Heart right ventricle (tissue), 16 donors: ENCODE measurements at regions of chrX and their contacts with region 1.

Region 1: DNA sequence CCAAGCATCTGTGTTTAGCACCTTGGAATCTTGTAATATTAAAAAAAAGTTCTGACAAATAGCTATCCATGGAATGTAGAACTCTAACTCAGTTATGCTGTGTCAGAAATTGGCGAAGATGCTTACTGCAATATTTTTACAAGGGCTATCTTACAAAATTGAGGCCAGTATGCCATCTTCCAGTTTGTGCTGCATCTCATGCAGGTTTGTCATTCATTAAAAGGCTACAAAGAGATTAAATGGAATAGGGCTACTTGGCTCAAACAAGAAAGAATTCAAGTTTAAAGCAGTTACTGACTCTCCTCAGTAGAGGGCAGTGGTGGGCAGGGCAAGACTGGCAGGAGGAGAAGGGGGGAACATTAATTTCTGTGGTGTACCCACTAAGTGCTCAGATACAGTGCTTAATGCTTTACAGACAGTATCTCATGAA is 66.5 kb downstream of the SHROOM4 start:
- DNase-seq: no peak
- ATAC-seq: no peak
- H3K4me3 ChIP-seq: no peak overlapping the region
- H3K27ac ChIP-seq: no peak overlapping the region
- H3K4me1 ChIP-seq: no peaks in the 10 kb centered on the region
- H3K27me3 ChIP-seq: peaks cover 0 to 42% (median 0%) of the 10 kb centered on the region in 7 donors
- CTCF ChIP-seq: peak; percentile 46 to 74 (median 66)

Region 2: GRCh38 chrX:50618788-50619558 is 128.5 kb before region 1 on chrX:
- intact Hi-C with region 1: no loop called
- DNase-seq: peak in 1 of 2 donors; percentile 12
- ATAC-seq: peak; percentile 57 to 95 (median 78)
- H3K4me3 ChIP-seq: no peak overlapping the region
- H3K27ac ChIP-seq: peak overlapping the region in 7 of 10 donors; percentile 13 to 76 (median 37)
- H3K4me1 ChIP-seq: peaks cover 0 to 8% (median 0%) of the 10 kb centered on the region in 9 donors
- H3K27me3 ChIP-seq: peaks cover 0 to 32% (median 0%) of the 10 kb centered on the region in 7 donors
- CTCF ChIP-seq: peak in 3 of 9 donors; percentile 13 to 42 (median 16)

Region 3: GRCh38 chrX:50691820-50692219 is 55.7 kb before region 1 on chrX:
- intact Hi-C with region 1: loop called in 1 of 10 experiments (anchors 10 kb)
- DNase-seq: no peak
- ATAC-seq: peak in 6 of 8 donors; percentile 44 to 65 (median 58)
- H3K4me3 ChIP-seq: no peak overlapping the region
- H3K27ac ChIP-seq: no peak overlapping the region
- H3K4me1 ChIP-seq: no peaks in the 10 kb centered on the region
- H3K27me3 ChIP-seq: peaks cover 0 to 59% (median 0%) of the 10 kb centered on the region in 7 donors
- CTCF ChIP-seq: peak; percentile 21 to 73 (median 63)

Region 4: GRCh38 chrX:50812995-50813826 is 65.7 kb after region 1 on chrX:
- intact Hi-C with region 1: loop called in 2 of 10 experiments (anchors 10 kb)
- DNase-seq: peak; percentile 45 to 46
- ATAC-seq: peak; percentile 56 to 85 (median 74)
- H3K4me3 ChIP-seq: peak overlapping the region; percentile 37 to 72 (median 62)
- H3K27ac ChIP-seq: peak overlapping the region; percentile 54 to 86 (median 82)
- H3K4me1 ChIP-seq: no peaks in the 10 kb centered on the region
- H3K27me3 ChIP-seq: peaks cover 0 to 61% (median 0%) of the 10 kb centered on the region in 7 donors
- CTCF ChIP-seq: no peak

Region 5: GRCh38 chrX:50905334-50905733 is 157.8 kb after region 1 on chrX:
- intact Hi-C with region 1: loop called (anchors 1 to 5 kb)
- DNase-seq: no peak
- ATAC-seq: no peak
- H3K4me3 ChIP-seq: no peak overlapping the region
- H3K27ac ChIP-seq: no peak overlapping the region
- H3K4me1 ChIP-seq: no peaks in the 10 kb centered on the region
- H3K27me3 ChIP-seq: peaks cover 0 to 52% (median 0%) of the 10 kb centered on the region in 7 donors
- CTCF ChIP-seq: peak in 3 of 9 donors; percentile 6 to 44 (median 11)

Region 6: DNA sequence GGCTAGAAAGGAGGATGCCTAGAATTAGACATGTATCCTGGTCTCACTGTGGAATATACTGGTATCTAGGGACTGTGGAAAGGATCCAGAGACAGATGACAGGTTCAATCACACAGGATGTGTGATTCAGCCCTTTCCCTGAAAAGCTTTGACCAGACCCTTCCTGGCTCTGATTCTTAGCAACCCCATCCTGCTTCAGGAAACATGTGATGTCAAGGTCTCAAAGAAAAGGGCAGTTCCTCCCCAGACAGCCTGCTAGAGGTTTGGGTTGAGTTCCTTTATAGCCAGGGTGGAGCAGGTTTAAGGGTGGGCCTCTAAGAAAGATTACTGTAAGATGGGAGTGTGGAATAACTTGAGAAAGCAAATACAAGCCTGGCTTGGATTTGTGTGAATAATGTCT is 166.0 kb after region 1 on chrX:
- intact Hi-C with region 1: loop called in 2 of 10 experiments (anchors 5 kb)
- DNase-seq: peak in 1 of 2 donors; percentile 8
- ATAC-seq: peak in 5 of 8 donors; percentile 54 to 86 (median 72)
- H3K4me3 ChIP-seq: no peak overlapping the region
- H3K27ac ChIP-seq: peak overlapping the region in 1 of 10 donors; percentile 36
- H3K4me1 ChIP-seq: no peaks in the 10 kb centered on the region
- H3K27me3 ChIP-seq: peaks cover 0 to 23% (median 0%) of the 10 kb centered on the region in 7 donors
- CTCF ChIP-seq: no peak

Region 7: GRCh38 chrX:50920132-50920531 is 172.6 kb after region 1 on chrX:
- intact Hi-C with region 1: loop called in 1 of 10 experiments (anchors 5 kb)
- DNase-seq: no peak
- ATAC-seq: no peak
- H3K4me3 ChIP-seq: no peak overlapping the region
- H3K27ac ChIP-seq: no peak overlapping the region
- H3K4me1 ChIP-seq: no peaks in the 10 kb centered on the region
- H3K27me3 ChIP-seq: peaks cover 0 to 34% (median 0%) of the 10 kb centered on the region in 7 donors
- CTCF ChIP-seq: peak in 7 of 9 donors; percentile 25 to 49 (median 39)

Region 8: GRCh38 chrX:50988649-50989048 is 241.2 kb after region 1 on chrX:
- intact Hi-C with region 1: loop called in 3 of 10 experiments (anchors 5 to 10 kb)
- DNase-seq: peak in 1 of 2 donors; percentile 3
- ATAC-seq: no peak
- H3K4me3 ChIP-seq: no peak overlapping the region
- H3K27ac ChIP-seq: no peak overlapping the region
- H3K4me1 ChIP-seq: no peaks in the 10 kb centered on the region
- H3K27me3 ChIP-seq: peaks cover 0 to 46% (median 0%) of the 10 kb centered on the region in 7 donors
- CTCF ChIP-seq: peak in 8 of 9 donors; percentile 17 to 60 (median 56)